HepG2 (cell line): ENCODE measurements at regions of chr12 and their contacts with region 1.

Region 1: DNA sequence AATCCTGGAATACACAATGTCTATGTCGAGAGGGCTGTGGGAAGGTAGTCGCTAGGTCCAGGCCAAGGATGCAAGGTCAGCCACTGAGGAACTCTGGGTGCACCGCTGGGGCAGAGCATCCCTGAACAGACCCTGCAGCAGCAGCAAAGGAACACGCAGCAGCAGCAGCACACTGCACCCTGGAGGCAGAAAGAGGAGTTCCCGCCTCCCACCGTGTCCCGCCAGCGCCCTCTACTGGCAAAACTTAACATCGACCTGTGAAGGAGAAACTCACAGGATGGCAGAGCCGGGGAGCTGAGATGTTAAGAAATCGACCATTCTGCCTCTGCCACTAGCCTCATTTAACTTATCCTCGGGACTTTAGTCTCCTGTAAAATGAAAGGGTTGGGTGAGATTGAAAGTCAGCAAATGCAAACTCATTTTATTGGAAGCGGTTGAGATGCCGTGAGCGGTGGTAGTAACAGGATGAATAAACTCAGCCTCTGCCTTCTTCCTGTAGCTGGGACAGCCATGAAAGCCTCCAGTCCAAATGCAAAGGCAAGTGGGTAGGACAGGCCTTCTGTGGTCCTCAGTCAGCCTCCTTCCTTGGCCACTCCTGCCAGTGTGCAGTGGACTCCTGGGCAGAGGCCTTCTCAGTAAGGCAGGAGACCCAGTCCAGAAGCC is 45.6 kb downstream of the STAB2 start:
- DNase-seq: peak; percentile 66
- ATAC-seq: peak; percentile 96
- H3K4me3 ChIP-seq: no peak overlapping the region
- H3K27ac ChIP-seq: no peak overlapping the region
- H3K4me1 ChIP-seq: no peaks in the 10 kb centered on the region
- H3K27me3 ChIP-seq: peaks cover 2 to 9% of the 10 kb centered on the region in 2 experiments; a peak in 1 of 5 replicates
- CTCF ChIP-seq: peak; percentile 96
- EP300 ChIP-seq: no peak
- POLR2A ChIP-seq: no peak
- RAD21 ChIP-seq: peak; percentile 69

Region 2: DNA sequence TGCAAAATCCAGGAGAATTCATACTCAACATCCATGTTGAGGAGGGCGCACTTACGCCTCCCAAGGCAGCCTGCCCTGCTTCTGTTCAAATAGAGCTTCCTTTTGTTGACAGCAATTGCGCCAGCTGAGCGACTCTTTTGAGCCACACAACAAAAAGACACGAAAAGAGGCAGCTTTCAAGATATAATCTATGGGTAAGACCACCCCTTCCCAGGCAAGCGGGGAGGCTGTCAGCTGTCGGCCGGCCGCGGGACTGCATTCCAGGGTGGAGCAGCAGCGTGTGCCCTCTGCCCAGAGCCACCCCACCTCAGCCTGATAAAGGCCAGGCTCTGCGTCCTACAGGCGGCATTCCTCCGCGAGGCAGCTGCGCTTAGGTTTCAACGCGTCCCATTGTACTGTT is 61.4 kb before region 1 on chr12:
- CTCF ChIA-PET with region 1: interaction called, 14 read pairs
- POLR2A ChIA-PET with region 1: no interaction called
- in situ Hi-C with region 1: no loop called
- intact Hi-C with region 1: loop called (anchors 1 kb)
- DNase-seq: peak; percentile 16
- ATAC-seq: peak; percentile 88
- H3K4me3 ChIP-seq: no peak overlapping the region
- H3K27ac ChIP-seq: no peak overlapping the region
- H3K4me1 ChIP-seq: no peaks in the 10 kb centered on the region
- H3K27me3 ChIP-seq: no peaks in the 10 kb centered on the region; a peak in 1 of 5 replicates
- CTCF ChIP-seq: no peak
- EP300 ChIP-seq: no peak
- POLR2A ChIP-seq: no peak
- RAD21 ChIP-seq: no peak